ENCODE measurements at regions of chr12 and their contacts with region 1.

Region 1: DNA sequence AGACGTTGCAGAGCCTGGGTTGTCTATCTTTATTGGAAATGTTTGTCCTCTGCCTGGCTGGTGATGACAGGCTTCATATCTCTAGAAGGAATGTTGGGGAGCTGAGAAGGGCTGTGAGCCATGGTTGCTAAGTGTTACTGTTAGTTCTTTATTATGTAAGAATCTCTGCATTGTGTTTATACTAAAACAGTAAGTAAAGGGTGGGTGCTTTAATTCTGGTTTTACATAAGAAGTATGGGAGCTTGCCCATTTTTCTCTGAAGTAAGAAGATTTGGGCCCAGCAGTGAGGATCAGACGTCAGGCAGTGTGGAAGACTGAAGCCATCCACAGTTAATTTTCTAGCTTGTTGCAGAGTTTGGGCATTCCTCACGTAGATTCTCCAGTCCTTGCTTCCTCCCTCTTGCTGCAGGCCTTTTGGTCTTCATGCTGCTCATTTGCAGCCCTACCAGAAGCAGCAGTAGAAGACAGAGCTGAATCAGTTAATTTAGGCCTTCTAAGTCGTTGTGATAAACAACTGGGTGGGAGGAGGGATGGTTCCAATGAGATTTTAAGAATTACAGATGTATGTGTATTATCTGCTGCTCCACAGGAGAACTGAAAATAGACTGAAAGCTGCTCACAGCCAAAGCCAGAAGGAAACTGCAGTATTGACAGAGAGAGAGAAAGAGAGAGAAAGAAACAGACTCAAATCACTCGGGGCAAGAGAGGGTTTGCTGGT is 21.4 kb downstream of the WNT5B start:
- DNase-seq: no peak
- H3K4me3 ChIP-seq: no peak overlapping the region
- H3K27ac ChIP-seq: no peak overlapping the region
- H3K4me1 ChIP-seq: peaks cover 0 to 3% (median 0%) of the 10 kb centered on the region in 4 experiments; a peak in 2 of 7 replicates
- H3K27me3 ChIP-seq: peaks cover 0 to 1% (median 0%) of the 10 kb centered on the region in 4 experiments; a peak in 1 of 7 replicates
- CTCF ChIP-seq: no peak
- EP300 ChIP-seq: no peak
- POLR2A ChIP-seq: no peak
- RAD21 ChIP-seq: no peak

Region 2: DNA sequence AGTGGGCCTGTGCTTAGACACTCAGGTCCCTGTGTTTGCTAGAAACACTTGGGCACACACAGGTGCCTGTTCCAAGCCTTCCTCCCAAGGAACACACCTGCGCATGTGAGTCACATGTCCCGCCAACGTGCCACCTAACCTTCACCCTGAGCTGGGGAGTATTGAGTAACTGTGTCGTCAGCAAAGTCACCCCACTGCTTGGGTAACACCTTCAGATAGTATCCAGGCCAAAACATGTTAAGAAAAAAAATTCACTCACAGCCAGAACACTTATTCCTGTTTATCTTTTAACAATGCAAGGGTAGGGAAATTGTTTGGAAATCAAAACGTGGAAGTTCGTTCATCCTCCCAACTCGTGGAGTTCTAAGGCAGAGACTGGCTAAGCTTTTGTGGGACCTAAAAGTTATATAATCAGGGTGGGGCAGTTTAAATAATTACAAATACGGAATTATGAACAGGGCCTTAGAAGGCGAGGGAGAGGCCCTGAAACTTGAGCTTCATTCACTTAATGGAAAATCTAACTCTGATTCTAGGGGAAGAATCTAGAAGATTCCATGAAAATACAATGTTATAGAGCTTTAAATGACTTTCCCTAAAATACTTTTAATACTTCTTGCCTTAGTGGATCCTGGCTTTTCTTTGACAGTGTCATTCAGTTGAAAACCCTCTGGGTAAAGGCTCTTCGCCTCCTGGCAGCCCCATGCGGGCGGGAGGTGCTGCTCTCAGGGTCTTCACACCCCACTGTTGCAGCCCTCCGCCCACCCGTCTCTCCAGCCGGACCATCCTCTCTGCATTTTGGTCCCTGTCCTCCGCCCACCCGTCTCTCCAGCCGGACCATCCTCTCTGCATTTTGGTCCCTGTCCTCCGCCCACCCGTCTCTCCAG is 10.1 kb after region 1 on chr12:
- CTCF ChIA-PET with region 1: interaction called, 10 read pairs
- POLR2A ChIA-PET with region 1: interaction called, 6 read pairs
- DNase-seq: no peak
- H3K4me3 ChIP-seq: peak overlapping the region in 2 of 4 experiments; percentile 23 to 51; a peak in 4 of 8 replicates
- H3K27ac ChIP-seq: no peak overlapping the region
- H3K4me1 ChIP-seq: no peaks in the 10 kb centered on the region
- H3K27me3 ChIP-seq: peaks cover 6 to 27% (median 20%) of the 10 kb centered on the region in 4 experiments
- CTCF ChIP-seq: no peak
- EP300 ChIP-seq: no peak
- POLR2A ChIP-seq: no peak
- RAD21 ChIP-seq: no peak

Region 3: GRCh38 chr12:1668833-1669543 is 18.6 kb after region 1 on chr12:
- CTCF ChIA-PET with region 1: interaction called, 11 read pairs
- POLR2A ChIA-PET with region 1: interaction called, 3 read pairs
- DNase-seq: no peak
- H3K4me3 ChIP-seq: no peak overlapping the region
- H3K27ac ChIP-seq: no peak overlapping the region
- H3K4me1 ChIP-seq: no peaks in the 10 kb centered on the region
- H3K27me3 ChIP-seq: peaks cover 0 to 2% (median under 1%) of the 10 kb centered on the region in 4 experiments; a peak in 6 of 7 replicates
- CTCF ChIP-seq: no peak
- EP300 ChIP-seq: no peak
- POLR2A ChIP-seq: no peak
- RAD21 ChIP-seq: no peak

Measured in H1 (cell line).